Activated CD4-positive, alpha-beta T cell treated with anti-CD3 and anti-CD28 coated beads, Interleukin-2, amount 10 ng/mL, durations not matched to agents 24 days and 14 days (primary cell): ENCODE measurements at regions of chr2 and their contacts with region 1.

Region 1: GRCh38 chr2:7437716-7438632 is 520.8 kb downstream of the RNF144A start:
- DNase-seq: peak; percentile 75
- H3K4me3 Mint-ChIP-seq: peak overlapping the region; percentile 53
- H3K27ac Mint-ChIP-seq: peak overlapping the region; percentile 96
- H3K4me1 Mint-ChIP-seq: peaks cover 65% of the 10 kb centered on the region
- H3K27me3 Mint-ChIP-seq: no peaks in the 10 kb centered on the region

Region 2: GRCh38 chr2:7450188-7450832 is 12.3 kb after region 1 on chr2:
- intact Hi-C with region 1: loop called (anchors 1 kb)
- DNase-seq: peak; percentile 90
- H3K4me3 Mint-ChIP-seq: peak overlapping the region; percentile 58
- H3K27ac Mint-ChIP-seq: peak overlapping the region; percentile 100
- H3K4me1 Mint-ChIP-seq: peaks cover 70% of the 10 kb centered on the region
- H3K27me3 Mint-ChIP-seq: no peaks in the 10 kb centered on the region

Region 3: DNA sequence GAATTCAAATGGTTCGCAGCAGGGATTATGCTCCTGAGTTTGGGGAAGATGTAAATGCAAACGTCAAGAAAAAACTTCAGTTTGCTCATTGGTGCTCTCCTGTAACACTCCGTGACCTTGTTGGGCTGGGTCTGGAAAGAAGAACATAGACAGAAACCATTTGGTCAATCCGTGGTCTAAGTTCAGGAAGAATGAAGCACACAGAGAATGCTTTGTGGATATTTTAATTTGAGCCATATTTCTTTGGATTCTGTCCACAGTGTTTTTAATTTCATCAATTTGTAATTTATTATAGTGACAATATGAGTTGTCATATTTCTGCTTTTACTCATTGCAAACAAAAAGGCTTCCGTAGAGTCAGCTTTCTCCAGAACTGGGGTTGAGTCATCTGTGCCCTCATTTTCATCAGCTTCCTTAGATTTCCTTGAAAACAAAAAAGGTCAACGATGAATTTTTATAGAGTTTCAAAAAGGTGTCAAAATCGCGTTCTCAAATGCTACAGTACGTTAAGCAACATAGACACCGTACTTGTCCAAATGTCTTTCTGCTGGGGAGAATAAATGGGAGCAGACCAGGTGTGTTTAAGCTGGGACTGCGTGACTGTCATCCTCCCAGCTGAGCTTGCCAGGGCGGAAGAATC is 85.6 kb after region 1 on chr2:
- intact Hi-C with region 1: loop called (anchors 1 kb)
- DNase-seq: no peak
- H3K4me3 Mint-ChIP-seq: peak overlapping the region; percentile 63
- H3K27ac Mint-ChIP-seq: peak overlapping the region; percentile 98
- H3K4me1 Mint-ChIP-seq: peaks cover 53% of the 10 kb centered on the region
- H3K27me3 Mint-ChIP-seq: no peaks in the 10 kb centered on the region

Region 4: DNA sequence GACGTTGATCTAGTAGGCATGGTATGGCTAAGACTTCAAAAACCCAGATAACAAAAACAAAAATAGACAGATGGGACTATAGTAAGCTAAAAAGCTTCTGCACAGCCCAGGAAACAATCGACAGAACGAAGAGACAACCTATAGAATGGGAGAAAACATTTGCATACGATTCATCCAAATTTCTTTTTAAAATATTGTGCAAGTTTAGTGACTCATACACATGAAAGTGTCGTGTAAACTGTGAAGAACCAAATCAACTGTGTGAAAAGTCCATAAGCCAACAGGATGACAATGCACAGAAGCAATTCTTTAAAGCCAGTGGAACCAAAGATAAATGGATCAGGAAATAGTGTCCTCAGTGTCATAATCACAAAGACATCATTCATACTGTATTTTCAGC is 150.3 kb after region 1 on chr2:
- intact Hi-C with region 1: loop called (anchors 1 kb)
- DNase-seq: peak; percentile 50
- H3K4me3 Mint-ChIP-seq: peak overlapping the region; percentile 2
- H3K27ac Mint-ChIP-seq: peak overlapping the region; percentile 68
- H3K4me1 Mint-ChIP-seq: peaks cover 22% of the 10 kb centered on the region
- H3K27me3 Mint-ChIP-seq: no peaks in the 10 kb centered on the region

Region 5: GRCh38 chr2:7930800-7931635 is 493.0 kb after region 1 on chr2:
- intact Hi-C with region 1: loop called (anchors 5 kb)
- DNase-seq: peak; percentile 54
- H3K4me3 Mint-ChIP-seq: peak overlapping the region; percentile 1
- H3K27ac Mint-ChIP-seq: peak overlapping the region; percentile 76
- H3K4me1 Mint-ChIP-seq: peaks cover 10% of the 10 kb centered on the region
- H3K27me3 Mint-ChIP-seq: no peaks in the 10 kb centered on the region

Region 6: GRCh38 chr2:8152392-8153257 is 714.7 kb after region 1 on chr2:
- intact Hi-C with region 1: loop called (anchors 1 kb)
- DNase-seq: peak; percentile 49
- H3K4me3 Mint-ChIP-seq: no peak overlapping the region
- H3K27ac Mint-ChIP-seq: peak overlapping the region; percentile 12
- H3K4me1 Mint-ChIP-seq: peaks cover 26% of the 10 kb centered on the region
- H3K27me3 Mint-ChIP-seq: no peaks in the 10 kb centered on the region